BJ (cell line): ENCODE measurements at regions of chr1 and their contacts with region 1.

Region 1: DNA sequence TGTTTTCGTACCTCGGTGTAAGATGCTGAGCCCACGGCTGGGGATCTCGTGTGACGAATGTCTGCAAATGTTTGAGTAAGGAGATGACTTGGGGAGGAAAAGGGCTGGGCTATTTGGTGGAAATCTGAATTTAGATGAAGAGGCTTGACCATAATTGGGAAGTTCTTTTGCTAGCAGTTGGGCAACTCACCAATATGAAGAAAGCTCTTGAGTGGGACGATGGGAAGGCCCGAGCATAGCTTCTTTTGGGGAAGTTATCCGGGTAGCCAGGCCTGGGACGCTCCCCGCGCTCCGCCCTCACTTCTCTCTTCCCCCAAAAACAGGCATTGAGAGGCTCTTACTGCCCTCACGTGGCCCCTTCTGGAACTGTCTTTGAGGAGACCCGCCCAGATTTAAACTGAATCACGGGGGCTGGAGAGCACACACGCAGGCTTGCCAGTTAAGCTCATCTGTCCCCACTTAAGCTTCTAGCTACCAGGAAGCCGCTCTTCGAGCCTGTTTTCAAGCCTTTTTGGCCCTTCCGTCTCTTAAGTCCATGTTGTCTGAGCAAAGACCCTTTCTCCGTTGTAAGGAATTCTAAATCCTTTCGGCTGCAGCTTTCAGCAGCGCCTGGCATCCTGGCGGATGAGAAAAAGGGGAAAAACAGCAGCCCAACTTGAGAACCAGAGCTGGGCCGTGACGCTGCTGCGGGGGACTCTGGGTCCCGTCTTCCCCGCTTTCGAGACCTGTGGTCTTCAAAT is 93.1 kb downstream of the NID1 start:
- DNase-seq: peak; percentile 88
- H3K4me3 ChIP-seq: peak overlapping the region; percentile 22
- H3K27me3 ChIP-seq: no peaks in the 10 kb centered on the region
- CTCF ChIP-seq: peak; percentile 85

Region 2: GRCh38 chr1:235504496-235505222 is 467.1 kb before region 1 on chr1:
- CTCF ChIA-PET with region 1: interaction called, 25 read pairs
- POLR2A ChIA-PET with region 1: no interaction called
- DNase-seq: peak; percentile 92
- H3K4me3 ChIP-seq: peak overlapping the region; percentile 87
- H3K27me3 ChIP-seq: no peaks in the 10 kb centered on the region
- CTCF ChIP-seq: peak; percentile 92

Region 3: GRCh38 chr1:235843461-235843961 is 128.2 kb before region 1 on chr1:
- CTCF ChIA-PET with region 1: interaction called, 21 read pairs
- POLR2A ChIA-PET with region 1: interaction called, 5 read pairs
- DNase-seq: no peak
- H3K4me3 ChIP-seq: no peak overlapping the region
- H3K27me3 ChIP-seq: no peaks in the 10 kb centered on the region
- CTCF ChIP-seq: peak; percentile 72

Region 4: GRCh38 chr1:235883261-235883927 is 88.3 kb before region 1 on chr1:
- CTCF ChIA-PET with region 1: interaction called, 13 read pairs
- POLR2A ChIA-PET with region 1: no interaction called
- DNase-seq: peak; percentile 99
- H3K4me3 ChIP-seq: no peak overlapping the region
- H3K27me3 ChIP-seq: no peaks in the 10 kb centered on the region
- CTCF ChIP-seq: no peak

Region 5: DNA sequence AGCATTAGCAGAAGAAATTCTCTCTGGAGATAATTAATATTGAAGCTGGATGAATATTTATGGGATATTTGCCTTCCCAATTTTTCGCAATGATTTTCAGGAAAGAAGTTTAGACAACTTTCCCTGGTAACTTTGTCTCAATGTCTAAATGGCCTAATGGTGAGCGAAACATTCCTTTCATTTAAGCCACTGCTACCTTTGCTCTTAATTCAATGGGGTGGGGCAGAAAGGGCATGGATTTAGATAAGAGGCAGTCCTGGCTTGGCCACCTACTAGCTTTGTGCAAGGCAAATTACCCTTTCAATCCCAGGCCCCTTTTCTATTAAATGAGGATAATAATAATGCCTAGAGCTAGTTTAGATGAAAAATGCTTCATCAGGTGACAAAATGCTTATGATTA is 77.9 kb before region 1 on chr1:
- CTCF ChIA-PET with region 1: no interaction called
- POLR2A ChIA-PET with region 1: no interaction called
- DNase-seq: no peak
- H3K4me3 ChIP-seq: no peak overlapping the region
- H3K27me3 ChIP-seq: no peaks in the 10 kb centered on the region
- CTCF ChIP-seq: no peak

Region 6: GRCh38 chr1:235943581-235944114 is 28.1 kb before region 1 on chr1:
- CTCF ChIA-PET with region 1: interaction called, 23 read pairs
- POLR2A ChIA-PET with region 1: no interaction called
- DNase-seq: peak; percentile 93
- H3K4me3 ChIP-seq: no peak overlapping the region
- H3K27me3 ChIP-seq: no peaks in the 10 kb centered on the region
- CTCF ChIP-seq: no peak

Region 7: DNA sequence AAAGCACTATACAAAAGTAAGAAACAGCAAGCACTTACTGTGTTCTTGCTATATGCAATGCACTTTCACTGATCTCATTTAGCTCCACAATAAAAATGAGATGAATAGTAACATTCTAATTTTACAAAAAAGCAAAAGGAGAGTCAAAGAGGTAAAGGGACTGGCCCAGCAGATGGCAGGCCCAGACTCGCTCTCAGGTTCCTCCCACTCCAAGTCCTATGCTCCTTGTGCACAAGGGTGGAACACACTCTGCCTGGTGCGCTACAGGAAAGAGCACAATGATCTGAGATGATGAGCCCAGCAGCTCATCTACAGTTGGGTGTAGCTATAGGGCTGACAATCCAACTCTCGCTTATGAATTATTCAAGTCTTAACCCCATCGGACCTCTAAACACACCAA is 10.9 kb before region 1 on chr1:
- CTCF ChIA-PET with region 1: interaction called, 24 read pairs
- POLR2A ChIA-PET with region 1: no interaction called
- DNase-seq: no peak
- H3K4me3 ChIP-seq: no peak overlapping the region
- H3K27me3 ChIP-seq: no peaks in the 10 kb centered on the region
- CTCF ChIP-seq: no peak

Region 8: DNA sequence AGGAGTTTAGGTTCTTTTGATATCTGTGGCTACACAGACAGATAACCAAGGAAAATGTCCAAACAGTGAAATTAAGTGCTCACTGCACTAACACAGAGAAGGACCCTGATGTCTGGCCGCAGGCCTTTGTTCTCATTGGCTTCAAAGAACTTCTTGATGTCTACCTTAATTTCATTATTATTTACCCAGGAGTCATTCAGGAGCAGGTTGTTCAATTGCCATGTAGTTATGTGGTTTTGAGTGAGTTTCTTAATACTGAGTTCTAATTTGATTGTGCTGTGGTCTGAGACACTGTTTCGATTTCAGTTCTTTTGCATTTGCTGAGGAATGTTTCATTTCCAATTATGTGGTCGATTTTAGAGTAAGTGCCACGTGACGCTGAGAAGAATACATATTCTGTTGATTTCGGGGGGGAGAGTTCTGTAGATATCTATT is 536.9 kb after region 1 on chr1:
- CTCF ChIA-PET with region 1: no interaction called
- POLR2A ChIA-PET with region 1: no interaction called
- DNase-seq: no peak
- H3K4me3 ChIP-seq: no peak overlapping the region
- H3K27me3 ChIP-seq: no peaks in the 10 kb centered on the region
- CTCF ChIP-seq: no peak